IMR-90 (cell line): ENCODE measurements at regions of chr6 and their contacts with region 1.

Region 1: DNA sequence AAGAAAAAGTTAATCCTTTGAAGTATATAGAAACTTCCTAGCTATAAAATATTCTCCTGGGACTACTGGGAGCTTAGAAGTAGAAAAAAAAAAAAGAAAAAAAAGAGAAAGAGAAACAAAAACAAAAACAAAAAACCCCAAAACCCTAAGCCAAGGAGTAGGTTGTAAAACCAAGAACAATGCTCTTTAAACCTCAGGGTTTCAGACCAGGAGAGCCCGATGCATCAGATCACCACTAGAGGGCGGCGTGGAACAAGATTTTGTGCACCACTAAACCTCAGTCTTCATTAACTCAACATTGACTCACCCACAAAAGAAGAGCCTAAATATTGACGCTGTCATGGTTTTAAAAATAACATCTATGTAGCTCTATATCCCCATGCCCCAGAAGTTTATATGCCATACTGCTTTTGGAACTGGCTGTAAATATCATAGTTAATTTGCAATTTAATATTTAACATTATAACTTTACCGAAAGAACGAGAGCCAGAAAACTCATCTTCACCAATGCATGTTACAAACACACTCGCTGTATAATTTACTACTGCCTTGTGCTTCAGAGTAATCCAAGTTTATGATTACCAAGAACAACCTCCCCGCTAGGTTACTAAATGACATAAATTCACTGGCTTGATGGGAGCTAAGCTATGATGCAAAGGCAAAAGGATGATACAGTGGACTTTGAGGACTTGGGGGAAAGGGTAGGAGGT is 19.2 kb downstream of the MCUR1 start:
- DNase-seq: peak; percentile 83
- ATAC-seq: peak; percentile 96
- H3K4me3 ChIP-seq: no peak overlapping the region
- H3K27ac ChIP-seq: no peak overlapping the region
- H3K4me1 ChIP-seq: no peaks in the 10 kb centered on the region
- H3K27me3 ChIP-seq: no peaks in the 10 kb centered on the region
- CTCF ChIP-seq: peak; percentile 91
- POLR2A ChIP-seq: peak; percentile 22; the same call in 1 of the 2 replicates
- RAD21 ChIP-seq: peak; percentile 76

Region 2: DNA sequence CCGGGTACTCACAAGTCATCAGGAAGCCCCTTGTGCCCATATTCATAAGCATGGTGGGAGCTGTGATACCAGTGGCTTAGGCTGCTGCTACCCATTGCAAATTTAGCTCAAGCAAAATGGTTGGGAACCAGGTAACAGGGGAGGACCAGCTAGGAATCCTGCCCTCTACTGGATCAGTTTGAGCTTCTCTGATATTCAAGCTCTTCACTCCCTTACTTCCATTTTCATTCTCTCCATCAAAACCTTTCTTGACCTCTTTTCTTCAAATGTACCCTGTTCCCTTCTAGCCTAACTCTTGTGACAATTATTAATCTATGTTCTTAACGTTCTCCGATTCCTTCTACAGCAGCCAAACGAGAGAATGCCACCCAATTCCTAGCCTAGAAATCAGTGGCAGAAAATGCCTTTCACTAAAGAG is 170.3 kb before region 1 on chr6:
- CTCF ChIA-PET with region 1: no interaction called
- POLR2A ChIA-PET with region 1: no interaction called
- dilution Hi-C with region 1: no loop called
- in situ Hi-C with region 1: no loop called
- intact Hi-C with region 1: loop called (anchors 10 kb)
- DNase-seq: peak; percentile 44
- ATAC-seq: peak; percentile 70
- H3K4me3 ChIP-seq: no peak overlapping the region
- H3K27ac ChIP-seq: no peak overlapping the region
- H3K4me1 ChIP-seq: no peaks in the 10 kb centered on the region
- H3K27me3 ChIP-seq: no peaks in the 10 kb centered on the region
- CTCF ChIP-seq: peak; percentile 46
- POLR2A ChIP-seq: no peak
- RAD21 ChIP-seq: peak; percentile 37

Region 3: DNA sequence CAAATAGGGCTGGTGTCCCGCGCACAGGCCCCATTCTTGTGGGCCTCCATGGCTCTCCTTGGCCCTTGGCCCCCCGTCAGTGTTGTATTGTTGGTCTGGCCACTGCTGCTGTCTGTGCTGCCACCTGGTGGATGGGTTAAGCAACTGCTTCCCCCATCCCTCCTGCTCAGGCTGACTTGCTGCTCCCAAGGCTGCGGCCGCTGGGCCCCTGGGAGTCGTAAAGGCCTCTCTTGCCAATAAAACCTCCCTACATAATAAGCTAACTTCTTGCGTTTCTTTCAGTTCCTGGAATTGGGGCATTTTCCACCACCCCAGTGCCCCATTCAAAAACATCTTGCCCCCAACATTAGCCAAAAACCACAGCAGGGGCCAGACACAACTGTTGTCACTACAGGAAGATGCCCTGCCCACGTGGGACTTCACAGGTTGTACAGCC is 349.5 kb after region 1 on chr6:
- CTCF ChIA-PET with region 1: no interaction called
- POLR2A ChIA-PET with region 1: no interaction called
- dilution Hi-C with region 1: no loop called
- in situ Hi-C with region 1: no loop called
- intact Hi-C with region 1: loop called (anchors 1 kb)
- DNase-seq: peak; percentile 62
- ATAC-seq: peak; percentile 94
- H3K4me3 ChIP-seq: no peak overlapping the region
- H3K27ac ChIP-seq: no peak overlapping the region
- H3K4me1 ChIP-seq: no peaks in the 10 kb centered on the region
- H3K27me3 ChIP-seq: peaks cover 34% of the 10 kb centered on the region
- CTCF ChIP-seq: peak; percentile 78
- POLR2A ChIP-seq: no peak
- RAD21 ChIP-seq: peak; percentile 74